GM10248 (cell line): ENCODE measurements at regions of chr20 and their contacts with region 1.

Region 1: GRCh38 chr20:1965520-1966351 is 28.1 kb downstream of the PDYN start:
- DNase-seq: peak; percentile 84
- CTCF ChIP-seq: peak; percentile 91

Region 2: GRCh38 chr20:1955217-1955616 is 10.5 kb before region 1 on chr20:
- CTCF ChIA-PET with region 1: interaction called, 20 read pairs
- POLR2A ChIA-PET with region 1: no interaction called
- DNase-seq: no peak
- CTCF ChIP-seq: no peak

Region 3: GRCh38 chr20:1987826-1988225 is 22.1 kb after region 1 on chr20:
- CTCF ChIA-PET with region 1: interaction called, 27 read pairs
- POLR2A ChIA-PET with region 1: no interaction called
- DNase-seq: no peak
- CTCF ChIP-seq: no peak